Endothelial cell of umbilical vein (primary cell): ENCODE measurements at regions of chr13 and their contacts with region 1.

Region 1: DNA sequence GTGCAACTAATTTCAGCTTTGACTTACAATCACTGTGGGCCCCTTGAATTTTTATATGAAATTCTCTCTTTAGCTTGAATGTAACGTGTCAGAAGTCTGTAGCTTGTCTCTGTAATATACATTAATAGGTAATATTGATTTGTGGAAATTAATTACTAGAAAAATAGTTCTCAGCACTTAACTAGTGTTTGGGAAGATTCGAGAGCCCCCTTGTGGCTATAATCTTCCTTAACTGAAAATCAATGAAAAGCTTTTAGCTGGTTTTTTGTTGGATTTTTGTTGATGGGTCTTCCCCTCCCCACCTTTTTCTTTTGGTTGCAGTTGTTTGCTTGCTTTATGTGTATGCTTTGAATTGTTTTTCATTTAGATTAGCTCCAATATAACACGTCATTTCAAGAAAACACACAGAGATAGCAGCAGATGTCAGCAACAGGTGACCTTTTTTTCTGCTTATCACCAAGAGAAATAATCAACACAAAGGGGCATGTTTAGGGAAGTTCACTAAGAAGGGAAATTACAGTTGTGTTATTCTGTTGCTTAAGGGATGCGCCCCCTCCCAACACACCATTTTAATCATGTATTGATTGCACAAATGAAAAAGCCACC is 176.8 kb downstream of the OXGR1 start:
- DNase-seq: peak; percentile 10
- H3K4me3 ChIP-seq: no peak overlapping the region
- H3K27ac ChIP-seq: no peak overlapping the region
- H3K4me1 ChIP-seq: no peaks in the 10 kb centered on the region
- H3K27me3 ChIP-seq: no peaks in the 10 kb centered on the region
- CTCF ChIP-seq: peak; percentile 17 to 29
- POLR2A ChIP-seq: no peak

Region 2: GRCh38 chr13:96003304-96003703 is 814.1 kb before region 1 on chr13:
- CTCF ChIA-PET with region 1: interaction called, 15 read pairs
- POLR2A ChIA-PET with region 1: no interaction called
- dilution Hi-C with region 1: no loop called
- intact Hi-C with region 1: no loop called
- DNase-seq: peak; percentile 69
- H3K4me3 ChIP-seq: no peak overlapping the region
- H3K27ac ChIP-seq: no peak overlapping the region
- H3K4me1 ChIP-seq: no peaks in the 10 kb centered on the region
- H3K27me3 ChIP-seq: no peaks in the 10 kb centered on the region
- CTCF ChIP-seq: no peak
- POLR2A ChIP-seq: no peak

Region 3: GRCh38 chr13:96141027-96141426 is 676.4 kb before region 1 on chr13:
- CTCF ChIA-PET with region 1: interaction called, 18 read pairs
- POLR2A ChIA-PET with region 1: no interaction called
- dilution Hi-C with region 1: no loop called
- intact Hi-C with region 1: no loop called
- DNase-seq: no peak
- H3K4me3 ChIP-seq: no peak overlapping the region
- H3K27ac ChIP-seq: no peak overlapping the region
- H3K4me1 ChIP-seq: no peaks in the 10 kb centered on the region
- H3K27me3 ChIP-seq: no peaks in the 10 kb centered on the region
- CTCF ChIP-seq: no peak
- POLR2A ChIP-seq: no peak